Dendritic cell treated with granulocyte-macrophage colony-stimulating factor and Interleukin-4, amounts not matched to agents 40 ng/mL and 50 ng/mL, for 4 days (primary cell): ENCODE measurements at regions of chr2 and their contacts with region 1.

Region 1: GRCh38 chr2:68709421-68709911 is 25.1 kb upstream of the ARHGAP25 start:
- H3K4me3 Mint-ChIP-seq: no peak overlapping the region
- H3K27ac Mint-ChIP-seq: peak overlapping the region; percentile 61
- H3K4me1 Mint-ChIP-seq: peaks cover 34% of the 10 kb centered on the region
- H3K27me3 Mint-ChIP-seq: no peaks in the 10 kb centered on the region

Region 2: GRCh38 chr2:68662466-68662865 is 47.0 kb before region 1 on chr2:
- intact Hi-C with region 1: no loop called
- H3K4me3 Mint-ChIP-seq: no peak overlapping the region
- H3K27ac Mint-ChIP-seq: peak overlapping the region; percentile 19
- H3K4me1 Mint-ChIP-seq: peaks cover 31% of the 10 kb centered on the region
- H3K27me3 Mint-ChIP-seq: peaks cover 5% of the 10 kb centered on the region

Region 3: GRCh38 chr2:68751397-68752339 is 42.2 kb after region 1 on chr2:
- intact Hi-C with region 1: loop called (anchors 5 kb)
- H3K4me3 Mint-ChIP-seq: no peak overlapping the region
- H3K27ac Mint-ChIP-seq: peak overlapping the region; percentile 56
- H3K4me1 Mint-ChIP-seq: peaks cover 85% of the 10 kb centered on the region
- H3K27me3 Mint-ChIP-seq: no peaks in the 10 kb centered on the region

Region 4: GRCh38 chr2:68909793-68910674 is 200.6 kb after region 1 on chr2:
- intact Hi-C with region 1: loop called (anchors 5 kb)
- H3K4me3 Mint-ChIP-seq: no peak overlapping the region
- H3K27ac Mint-ChIP-seq: peak overlapping the region; percentile 62
- H3K4me1 Mint-ChIP-seq: peaks cover 26% of the 10 kb centered on the region
- H3K27me3 Mint-ChIP-seq: no peaks in the 10 kb centered on the region